ENCODE measurements at regions of chr4 and their contacts with region 1.

Region 1: DNA sequence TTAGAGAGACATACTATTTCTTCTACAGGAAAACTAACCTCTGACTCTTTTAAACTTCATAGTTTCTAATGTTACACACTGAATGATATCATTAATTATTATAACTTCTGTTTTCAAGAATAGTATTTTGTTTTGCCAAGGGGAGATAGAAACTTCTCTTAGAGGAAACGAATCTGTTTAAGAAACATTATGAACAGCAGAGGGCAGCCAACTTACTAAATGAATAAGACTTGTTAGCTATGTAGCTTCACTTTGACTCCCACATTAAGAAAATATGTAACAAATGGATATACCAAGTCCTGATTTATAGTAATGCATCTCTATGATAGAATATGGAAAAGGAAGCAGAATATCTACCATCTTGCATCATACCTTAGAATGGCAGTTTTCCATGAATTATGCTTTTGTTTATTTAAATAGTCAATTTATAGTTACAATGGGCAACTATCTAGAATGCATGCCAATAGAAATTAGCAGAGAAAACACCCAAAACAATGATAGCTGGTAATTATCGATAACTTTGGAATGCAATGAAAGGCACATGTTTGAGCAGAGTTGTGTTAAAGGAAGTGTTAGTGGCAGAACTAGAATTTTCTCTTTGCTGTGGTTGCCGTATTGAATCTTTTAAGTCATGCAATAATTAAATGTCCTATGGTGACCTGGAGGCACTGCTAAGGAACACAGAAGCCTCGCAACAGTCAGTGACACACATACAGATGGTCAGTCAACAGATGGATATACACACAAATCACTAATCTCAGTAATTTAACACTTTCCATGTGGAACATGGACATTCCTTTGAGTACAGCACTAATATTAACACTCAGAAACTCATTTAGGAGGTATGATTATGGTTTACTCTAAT is 105.7 kb upstream of the PDLIM3 start:
- DNase-seq: no peak
- ATAC-seq: no peak
- H3K4me3 ChIP-seq: no peak overlapping the region
- H3K27ac ChIP-seq: no peak overlapping the region
- H3K4me1 ChIP-seq: no peaks in the 10 kb centered on the region
- H3K27me3 ChIP-seq: no peaks in the 10 kb centered on the region

Region 2: GRCh38 chr4:185811509-185812364 is 170.7 kb after region 1 on chr4 and contains the start of gene SORBS2:
- intact Hi-C with region 1: loop called in 1 of 4 experiments (anchors 10 kb)
- DNase-seq: peak in 1 of 3 donors; percentile 62
- ATAC-seq: peak; percentile 84 to 85
- H3K4me3 ChIP-seq: peak within 1 kb of the TSS; percentile 73
- H3K27ac ChIP-seq: peak within 1 kb of the TSS; percentile 95
- H3K4me1 ChIP-seq: no peaks in the 10 kb centered on the region
- H3K27me3 ChIP-seq: no peaks in the 10 kb centered on the region
- total RNA-seq, gene SORBS2: 578 to 776 (median 669) TPM

Region 3: DNA sequence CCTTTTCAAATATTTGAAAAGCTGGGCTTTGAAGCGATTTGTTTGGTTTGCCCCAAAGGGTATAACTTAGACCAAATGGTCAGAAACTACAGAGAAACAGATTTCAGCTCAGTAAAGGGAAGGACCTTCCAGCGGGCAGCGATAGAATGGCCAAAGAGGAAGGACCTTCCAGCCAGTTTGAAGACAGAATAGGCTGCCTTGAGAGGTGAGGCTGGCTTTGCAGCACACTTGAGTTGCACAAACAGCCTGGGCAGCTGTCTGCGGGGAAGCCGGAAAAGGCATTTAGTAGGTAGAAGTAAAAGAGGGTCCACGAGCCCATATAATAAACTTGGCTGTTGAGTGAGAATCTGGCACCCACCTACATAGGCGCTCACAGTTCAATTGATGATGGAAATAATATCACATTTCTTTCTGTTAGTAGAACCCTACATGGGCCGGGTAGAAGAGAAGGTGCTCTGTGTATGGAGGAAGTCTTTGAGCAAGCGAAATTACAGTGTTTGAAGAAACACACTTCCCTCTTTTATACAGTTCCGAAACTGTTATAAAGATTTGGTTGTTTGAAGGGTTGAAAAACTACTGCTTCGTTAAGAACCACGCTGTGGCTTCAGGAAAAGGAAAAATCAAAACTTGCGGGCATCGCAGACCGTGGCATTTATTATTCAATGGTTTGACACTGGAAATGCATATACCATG is 245.9 kb after region 1 on chr4:
- intact Hi-C with region 1: no loop called
- DNase-seq: no peak
- ATAC-seq: no peak
- H3K4me3 ChIP-seq: no peak overlapping the region
- H3K27ac ChIP-seq: no peak overlapping the region
- H3K4me1 ChIP-seq: no peaks in the 10 kb centered on the region
- H3K27me3 ChIP-seq: no peaks in the 10 kb centered on the region

Region 4: DNA sequence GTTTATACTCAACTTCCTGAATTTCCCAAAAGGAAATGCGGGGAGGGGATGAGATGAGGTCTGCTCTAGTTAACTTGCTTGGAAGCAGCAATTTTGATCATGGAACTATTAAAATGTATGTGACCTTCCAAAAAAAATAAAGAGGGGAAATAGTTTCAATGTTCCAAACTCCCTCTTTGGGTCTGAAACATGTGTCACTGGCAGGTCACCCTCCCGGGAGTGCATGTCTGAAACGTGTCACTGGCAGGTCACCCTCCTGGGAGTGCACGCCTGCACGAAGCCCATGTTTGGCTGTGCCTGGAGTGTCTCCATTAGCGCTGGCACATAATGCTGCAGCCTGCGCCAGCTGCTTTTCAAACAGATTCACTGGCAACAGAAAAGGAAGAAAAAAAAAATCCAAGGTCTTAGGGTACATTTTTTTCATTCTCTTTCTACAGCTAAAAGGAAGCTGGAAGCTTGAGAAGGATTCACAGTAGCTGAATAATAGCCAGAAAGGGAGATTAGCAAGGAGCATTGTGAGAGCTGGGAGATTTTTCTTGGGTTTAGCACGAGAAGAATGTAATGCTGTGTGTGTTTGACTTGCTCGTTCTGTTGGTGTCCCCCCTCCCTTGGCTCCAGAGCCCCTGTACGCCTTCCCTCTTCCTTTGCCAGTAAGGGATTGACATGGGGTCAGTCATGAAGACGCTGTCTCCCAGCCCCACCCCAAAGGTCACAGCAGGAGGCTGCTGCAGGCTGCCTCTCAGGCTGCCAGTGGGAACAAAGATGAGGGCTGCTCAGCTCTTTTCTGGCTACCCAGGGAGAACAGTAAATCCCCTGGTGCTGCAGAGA is 388.7 kb after region 1 on chr4:
- intact Hi-C with region 1: loop called in 3 of 4 experiments (anchors 5 to 10 kb)
- DNase-seq: peak; percentile 79 to 96 (median 94)
- ATAC-seq: peak; percentile 95 to 97
- H3K4me3 ChIP-seq: no peak overlapping the region
- H3K27ac ChIP-seq: peak overlapping the region; percentile 97
- H3K4me1 ChIP-seq: peaks cover 7% of the 10 kb centered on the region
- H3K27me3 ChIP-seq: no peaks in the 10 kb centered on the region